Calu3 (cell line): ENCODE measurements at regions of chr3 and their contacts with region 1.

Region 1: GRCh38 chr3:7709376-7710082 is 792.1 kb upstream of the LMCD1 start:
- DNase-seq: no peak
- H3K4me3 Mint-ChIP-seq: no peak overlapping the region
- H3K27ac Mint-ChIP-seq: no peak overlapping the region
- H3K4me1 Mint-ChIP-seq: peaks cover 8% of the 10 kb centered on the region
- H3K27me3 Mint-ChIP-seq: no peaks in the 10 kb centered on the region
- CTCF ChIP-seq: no peak

Region 2: GRCh38 chr3:7734456-7734855 is 24.9 kb after region 1 on chr3:
- CTCF ChIA-PET with region 1: interaction called, 10 read pairs
- intact Hi-C with region 1: no loop called
- DNase-seq: no peak
- H3K4me3 Mint-ChIP-seq: no peak overlapping the region
- H3K27ac Mint-ChIP-seq: no peak overlapping the region
- H3K4me1 Mint-ChIP-seq: no peaks in the 10 kb centered on the region
- H3K27me3 Mint-ChIP-seq: no peaks in the 10 kb centered on the region
- CTCF ChIP-seq: no peak